ENCODE measurements at regions of chr2 and their contacts with region 1.

Region 1: GRCh38 chr2:169573160-169573973 is at the start of gene FASTKD1:
- DNase-seq: peak; percentile 95
- ATAC-seq: peak; percentile 99
- H3K4me3 ChIP-seq: peak within 1 kb of the TSS; percentile 83 to 86 (median 84)
- H3K27ac ChIP-seq: peak within 1 kb of the TSS; percentile 52
- H3K4me1 ChIP-seq: peaks cover 29% of the 10 kb centered on the region
- H3K27me3 ChIP-seq: no peaks in the 10 kb centered on the region; a peak in 1 of 5 replicates
- CTCF ChIP-seq: no peak
- EP300 ChIP-seq: peak; percentile 23 to 73; a peak in 3 of 4 replicates
- POLR2A ChIP-seq: peak; percentile 42 to 72; a peak in 3 of 4 replicates
- RAD21 ChIP-seq: peak; percentile 40
- total RNA-seq, gene FASTKD1: 38.0 and 43.2 TPM in 2 replicates

Region 2: DNA sequence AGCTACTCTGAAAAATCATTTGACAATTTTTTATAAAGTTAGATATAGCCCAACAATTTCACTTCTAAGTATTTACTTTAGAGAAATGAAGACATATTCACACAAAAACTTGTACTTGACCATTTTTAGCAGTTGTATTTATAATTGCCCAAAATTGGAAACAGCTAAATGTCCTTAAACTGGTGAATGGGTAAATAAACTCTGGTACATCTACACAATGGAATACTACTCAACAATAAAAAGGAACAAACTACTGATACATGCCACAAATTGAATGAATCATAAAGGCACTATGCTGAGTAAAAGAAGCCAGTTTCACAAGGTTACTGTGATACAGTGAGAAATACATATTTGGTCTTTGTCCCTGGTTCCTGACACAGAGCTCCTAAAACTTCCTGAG is 126.9 kb before region 1 on chr2:
- CTCF ChIA-PET with region 1: no interaction called
- POLR2A ChIA-PET with region 1: no interaction called
- in situ Hi-C with region 1: no loop called
- intact Hi-C with region 1: no loop called
- DNase-seq: no peak
- ATAC-seq: no peak
- H3K4me3 ChIP-seq: no peak overlapping the region
- H3K27ac ChIP-seq: no peak overlapping the region
- H3K4me1 ChIP-seq: no peaks in the 10 kb centered on the region
- H3K27me3 ChIP-seq: peaks cover 0 to 8% of the 10 kb centered on the region in 2 experiments; a peak in 1 of 5 replicates
- CTCF ChIP-seq: no peak
- EP300 ChIP-seq: no peak
- POLR2A ChIP-seq: no peak
- RAD21 ChIP-seq: no peak

Region 3: GRCh38 chr2:169479257-169480078 is 93.9 kb before region 1 on chr2 and contains the start of gene BBS5:
- CTCF ChIA-PET with region 1: no interaction called
- POLR2A ChIA-PET with region 1: interaction called, 6 read pairs
- in situ Hi-C with region 1: no loop called
- intact Hi-C with region 1: loop called (anchors 5 kb)
- DNase-seq: peak; percentile 64
- ATAC-seq: peak; percentile 95
- H3K4me3 ChIP-seq: peak within 1 kb of the TSS; percentile 62 to 85 (median 85)
- H3K27ac ChIP-seq: no peak within 1 kb of the TSS
- H3K4me1 ChIP-seq: peaks cover 55% of the 10 kb centered on the region
- H3K27me3 ChIP-seq: no peaks in the 10 kb centered on the region; a peak in 1 of 5 replicates
- CTCF ChIP-seq: peak; percentile 97
- EP300 ChIP-seq: no peak
- POLR2A ChIP-seq: peak; percentile 39 to 55
- RAD21 ChIP-seq: peak; percentile 82
- total RNA-seq, gene BBS5: 3.3 and 4.5 TPM in 2 replicates

Region 4: GRCh38 chr2:169584005-169584877 is 10.9 kb after region 1 on chr2 and contains the start of gene PPIG:
- CTCF ChIA-PET with region 1: no interaction called
- POLR2A ChIA-PET with region 1: interaction called, 21 read pairs
- in situ Hi-C with region 1: no loop called
- intact Hi-C with region 1: loop called (anchors 1 kb)
- DNase-seq: peak; percentile 91
- ATAC-seq: peak; percentile 91
- H3K4me3 ChIP-seq: peak within 1 kb of the TSS; percentile 80 to 99 (median 96)
- H3K27ac ChIP-seq: peak within 1 kb of the TSS; percentile 96
- H3K4me1 ChIP-seq: peaks cover 35% of the 10 kb centered on the region
- H3K27me3 ChIP-seq: peaks cover 0 to 7% of the 10 kb centered on the region in 2 experiments; a peak in 2 of 5 replicates
- CTCF ChIP-seq: peak; percentile 14; the same call in 1 of the 2 replicates
- EP300 ChIP-seq: peak in 1 of 2 experiments; percentile 72; a peak in 2 of 4 replicates
- POLR2A ChIP-seq: peak; percentile 63 to 88
- RAD21 ChIP-seq: no peak
- total RNA-seq, gene PPIG: 81.0 and 133 TPM in 2 replicates